Calu3 (cell line): ENCODE measurements at regions of chrX and their contacts with region 1.

Region 1: DNA sequence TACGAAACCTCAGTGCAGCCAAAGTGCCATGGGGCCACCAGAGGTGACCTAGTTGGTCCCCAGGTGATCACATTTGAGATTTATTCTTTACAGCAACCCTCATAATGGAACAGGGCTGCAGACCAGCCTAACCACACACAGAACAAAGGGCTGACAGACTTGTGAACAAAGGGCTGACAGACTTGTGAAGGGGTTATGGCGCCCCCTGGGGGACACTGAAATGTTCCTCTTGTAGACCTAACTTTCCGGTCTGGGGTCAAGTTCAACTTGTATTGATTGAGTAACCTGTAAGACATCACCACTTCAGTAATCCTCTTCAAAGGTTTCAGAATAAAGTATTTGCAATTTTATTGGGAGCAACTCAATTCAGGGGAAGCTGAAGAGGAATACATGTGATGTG is 175.9 kb upstream of the RPS6KA3 start:
- DNase-seq: peak; percentile 87
- H3K4me3 Mint-ChIP-seq: no peak overlapping the region
- H3K27ac Mint-ChIP-seq: no peak overlapping the region
- H3K4me1 Mint-ChIP-seq: no peaks in the 10 kb centered on the region
- H3K27me3 Mint-ChIP-seq: no peaks in the 10 kb centered on the region
- CTCF ChIP-seq: peak; percentile 65

Region 2: DNA sequence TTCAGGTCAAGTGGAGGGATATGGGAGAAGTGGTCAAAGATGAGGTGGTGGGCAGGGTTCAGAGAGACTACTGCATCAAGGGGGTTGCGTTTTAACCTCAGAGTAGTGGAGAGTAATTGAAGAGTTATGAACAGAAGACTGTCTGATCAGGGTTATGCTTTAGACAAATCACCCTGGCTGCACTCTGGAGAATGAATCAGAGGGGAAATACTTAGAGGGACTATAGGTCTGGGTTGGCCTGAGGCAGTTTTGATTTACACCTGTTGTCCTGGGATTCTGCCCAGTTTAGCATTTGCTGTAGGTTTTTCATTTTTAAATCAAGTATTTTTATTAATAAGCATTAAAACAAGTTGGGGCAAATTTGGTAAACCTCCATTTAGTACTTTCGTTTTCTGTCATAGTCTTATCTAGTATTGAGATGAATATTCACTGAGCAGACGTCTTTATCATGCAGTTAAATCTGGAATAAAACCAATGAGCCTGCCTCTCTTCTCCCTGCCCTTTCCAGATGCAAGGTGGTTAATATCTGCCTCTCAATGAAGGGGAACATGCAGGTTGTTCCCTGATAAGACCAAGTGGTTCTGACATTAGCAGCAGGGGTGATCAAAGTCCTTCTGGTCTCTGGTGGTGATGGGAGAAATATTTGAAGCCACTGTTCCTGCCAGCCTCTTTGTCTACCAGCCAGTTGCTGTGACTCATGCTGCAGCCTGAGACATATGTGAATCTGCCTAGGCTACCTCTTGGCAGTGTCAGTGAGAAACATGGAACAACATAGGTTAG is 59.9 kb before region 1 on chrX:
- CTCF ChIA-PET with region 1: no interaction called
- intact Hi-C with region 1: loop called (anchors 5 kb)
- DNase-seq: peak; percentile 12
- H3K4me3 Mint-ChIP-seq: no peak overlapping the region
- H3K27ac Mint-ChIP-seq: no peak overlapping the region
- H3K4me1 Mint-ChIP-seq: peaks cover 42% of the 10 kb centered on the region
- H3K27me3 Mint-ChIP-seq: no peaks in the 10 kb centered on the region
- CTCF ChIP-seq: no peak